Vagina (tissue), 2 donors: ENCODE measurements at regions of chr10 and their contacts with region 1.

Region 1: GRCh38 chr10:4101918-4102654 is 317.1 kb upstream of the KLF6 start:
- DNase-seq: no peak
- H3K4me3 ChIP-seq: no peak overlapping the region
- H3K27ac ChIP-seq: no peak overlapping the region
- H3K4me1 ChIP-seq: no peaks in the 10 kb centered on the region
- H3K27me3 ChIP-seq: no peaks in the 10 kb centered on the region
- CTCF ChIP-seq: no peak
- POLR2A ChIP-seq: no peak

Region 2: GRCh38 chr10:4081685-4082111 is 20.4 kb before region 1 on chr10:
- intact Hi-C with region 1: loop called (anchors 2 kb)
- DNase-seq: no peak
- H3K4me3 ChIP-seq: no peak overlapping the region
- H3K27ac ChIP-seq: peak overlapping the region; percentile 47
- H3K4me1 ChIP-seq: peaks cover 13% of the 10 kb centered on the region
- H3K27me3 ChIP-seq: no peaks in the 10 kb centered on the region
- CTCF ChIP-seq: no peak
- POLR2A ChIP-seq: no peak

Region 3: DNA sequence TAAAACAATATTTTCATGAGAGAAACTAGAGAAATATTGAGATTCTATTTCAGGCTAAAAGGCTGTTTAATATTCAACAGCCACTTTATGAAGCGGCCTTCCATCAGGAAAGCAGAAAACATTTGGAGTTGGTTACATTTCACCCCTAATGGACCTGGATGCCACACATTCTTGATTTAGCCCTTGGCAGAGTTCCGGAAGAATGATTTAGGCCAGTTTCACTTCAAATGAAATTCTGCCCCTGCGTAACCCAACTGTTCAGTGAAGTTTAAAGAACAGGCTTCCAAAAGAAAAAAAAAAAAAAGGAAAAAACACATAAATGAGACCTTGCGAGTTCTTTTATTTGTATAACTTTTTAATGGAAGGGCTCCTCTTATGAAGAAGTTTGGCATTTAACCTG is 484.7 kb after region 1 on chr10:
- intact Hi-C with region 1: no loop called
- DNase-seq: no peak
- H3K4me3 ChIP-seq: no peak overlapping the region
- H3K27ac ChIP-seq: no peak overlapping the region
- H3K4me1 ChIP-seq: no peaks in the 10 kb centered on the region
- H3K27me3 ChIP-seq: no peaks in the 10 kb centered on the region
- CTCF ChIP-seq: no peak
- POLR2A ChIP-seq: no peak